ENCODE measurements at regions of chr3 and their contacts with region 1.

Region 1: GRCh38 chr3:97940034-97940433 is 32.2 kb downstream of the RIOX2 start:
- DNase-seq: no peak
- H3K4me3 Mint-ChIP-seq: no peak overlapping the region
- H3K27ac Mint-ChIP-seq: no peak overlapping the region
- H3K4me1 Mint-ChIP-seq: peaks cover 17% of the 10 kb centered on the region
- H3K27me3 Mint-ChIP-seq: no peaks in the 10 kb centered on the region

Region 2: GRCh38 chr3:96756516-96756915 is 1183.5 kb before region 1 on chr3:
- CTCF ChIA-PET with region 1: no interaction called
- intact Hi-C with region 1: loop called (anchors 5 kb)
- DNase-seq: no peak
- H3K4me3 Mint-ChIP-seq: no peak overlapping the region
- H3K27ac Mint-ChIP-seq: no peak overlapping the region
- H3K4me1 Mint-ChIP-seq: no peaks in the 10 kb centered on the region
- H3K27me3 Mint-ChIP-seq: peaks cover 2% of the 10 kb centered on the region